ENCODE measurements at regions of chr15 and their contacts with region 1.

Region 1: GRCh38 chr15:45307230-45307924 is 55.3 kb downstream of the SLC28A2 start:
- H3K4me3 Mint-ChIP-seq: peak overlapping the region; percentile 51
- H3K27ac Mint-ChIP-seq: no peak overlapping the region
- H3K4me1 Mint-ChIP-seq: peaks cover 13% of the 10 kb centered on the region
- H3K27me3 Mint-ChIP-seq: peaks cover 22% of the 10 kb centered on the region

Region 2: DNA sequence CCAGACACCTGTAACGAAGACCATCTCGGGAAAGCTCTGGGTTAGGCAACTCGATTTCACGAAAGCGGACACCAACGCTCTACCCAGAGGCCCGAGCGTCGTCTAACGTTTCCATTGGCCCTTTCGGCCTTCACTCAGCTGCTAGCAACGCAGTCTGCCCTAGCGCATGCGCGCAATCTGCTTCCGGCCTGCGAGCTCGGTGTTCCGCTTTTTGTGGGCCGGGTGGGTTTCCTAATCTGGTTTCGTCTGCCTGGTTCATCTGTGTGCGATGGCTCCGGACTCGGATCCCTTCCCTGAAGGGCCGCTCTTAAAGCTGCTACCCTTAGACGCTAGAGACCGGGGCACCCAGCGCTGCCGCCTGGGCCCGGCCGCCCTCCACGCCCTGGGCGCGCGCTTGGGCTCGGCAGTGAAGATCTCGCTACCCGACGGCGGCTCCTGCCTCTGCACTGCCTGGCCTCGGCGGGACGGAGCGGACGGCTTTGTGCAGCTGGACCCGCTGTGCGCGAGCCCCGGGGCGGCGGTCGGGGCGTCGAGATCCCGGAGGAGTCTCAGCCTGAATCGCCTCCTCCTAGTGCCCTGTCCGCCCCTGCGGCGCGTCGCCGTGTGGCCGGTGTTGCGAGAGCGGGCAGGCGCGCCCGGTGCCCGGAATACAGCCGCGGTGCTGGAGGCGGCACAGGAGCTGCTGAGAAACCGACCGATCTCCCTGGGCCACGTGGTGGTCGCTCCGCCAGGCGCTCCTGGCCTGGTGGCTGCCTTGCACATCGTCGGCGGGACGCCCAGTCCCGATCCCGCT is 95.0 kb after region 1 on chr15:
- intact Hi-C with region 1: loop called (anchors 1 kb)
- H3K4me3 Mint-ChIP-seq: peak overlapping the region; percentile 95
- H3K27ac Mint-ChIP-seq: peak overlapping the region; percentile 92
- H3K4me1 Mint-ChIP-seq: peaks cover 35% of the 10 kb centered on the region
- H3K27me3 Mint-ChIP-seq: no peaks in the 10 kb centered on the region